Activated naive CD4-positive, alpha-beta T cell treated with anti-CD3 and anti-CD28 coated beads for 36 hours (primary cell): ENCODE measurements at regions of chr5 and their contacts with region 1.

Region 1: GRCh38 chr5:157219491-157220271 is 39.0 kb downstream of the ITK start:
- DNase-seq: peak; percentile 65
- H3K4me3 Mint-ChIP-seq: peak overlapping the region; percentile 45
- H3K27ac Mint-ChIP-seq: peak overlapping the region; percentile 97
- H3K4me1 Mint-ChIP-seq: peaks cover 81% of the 10 kb centered on the region
- H3K27me3 Mint-ChIP-seq: no peaks in the 10 kb centered on the region

Region 2: DNA sequence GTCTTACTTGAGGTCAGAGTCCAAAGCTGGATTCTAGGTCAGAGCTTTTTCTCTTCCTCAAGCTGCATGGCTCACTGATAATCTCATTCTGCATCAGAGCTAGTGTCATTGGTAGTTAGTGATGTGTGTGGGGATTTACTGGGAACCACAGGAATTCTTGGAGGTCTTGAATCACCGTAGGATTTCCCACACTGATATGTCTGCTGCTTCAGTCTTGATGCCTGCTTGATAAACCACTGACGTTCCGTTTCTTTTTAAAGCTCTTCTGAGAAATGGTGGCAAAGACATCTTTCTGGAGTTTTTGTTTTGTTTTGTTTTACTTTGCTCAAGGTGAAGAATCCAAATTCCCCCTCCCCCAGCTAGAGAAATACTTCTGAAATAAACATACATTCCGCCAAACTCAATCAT is 52.5 kb before region 1 on chr5:
- CTCF ChIA-PET with region 1: interaction called, 3 read pairs
- intact Hi-C with region 1: loop called (anchors 1 kb)
- DNase-seq: peak; percentile 61
- H3K4me3 Mint-ChIP-seq: peak overlapping the region; percentile 64
- H3K27ac Mint-ChIP-seq: peak overlapping the region; percentile 100
- H3K4me1 Mint-ChIP-seq: peaks cover 79% of the 10 kb centered on the region
- H3K27me3 Mint-ChIP-seq: no peaks in the 10 kb centered on the region

Region 3: DNA sequence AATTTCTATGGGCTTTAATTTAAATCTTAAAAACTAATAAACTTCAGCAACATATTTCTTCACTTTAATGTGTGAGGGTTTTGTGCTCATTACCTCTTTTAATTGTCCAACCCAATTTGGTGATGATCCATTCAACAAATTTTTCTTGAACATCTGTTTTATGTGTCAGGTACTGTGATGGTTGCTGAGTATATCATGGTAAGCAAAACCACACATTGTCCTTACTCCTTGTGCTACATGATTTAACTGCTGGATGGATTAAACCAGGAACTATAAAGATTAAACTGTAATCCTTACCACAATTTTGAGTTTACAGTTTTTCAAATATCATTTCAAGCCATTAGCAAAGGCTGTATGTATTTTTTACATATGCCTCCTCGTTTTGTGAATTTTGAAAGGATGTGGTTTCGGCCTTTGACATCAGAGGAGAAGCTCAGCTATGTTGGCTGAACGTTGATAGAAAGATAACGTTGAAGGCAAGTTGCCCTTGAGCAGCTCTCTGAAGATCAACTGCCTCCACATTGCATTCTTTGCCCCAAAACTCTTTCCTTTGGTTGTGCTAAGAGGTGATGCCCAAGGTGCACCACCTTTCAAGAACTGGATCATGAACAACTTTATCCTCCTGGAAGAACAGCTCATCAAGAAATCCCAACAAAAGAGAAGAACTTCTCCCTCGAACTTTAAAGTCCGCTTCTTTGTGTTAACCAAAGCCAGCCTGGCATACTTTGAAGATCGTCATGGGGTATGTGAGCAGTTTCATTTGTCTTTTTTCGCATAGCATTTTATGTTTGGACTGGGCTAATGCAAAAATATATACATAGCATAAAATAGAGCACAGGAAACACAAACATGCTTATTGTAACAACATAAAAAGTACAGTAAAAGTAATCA is 39.1 kb before region 1 on chr5 and contains the start of gene ITK:
- CTCF ChIA-PET with region 1: interaction called, 7 read pairs
- intact Hi-C with region 1: loop called (anchors 1 kb)
- DNase-seq: no peak
- H3K4me3 Mint-ChIP-seq: peak within 1 kb of the TSS; percentile 98
- H3K27ac Mint-ChIP-seq: peak within 1 kb of the TSS; percentile 100
- H3K4me1 Mint-ChIP-seq: peaks cover 50% of the 10 kb centered on the region
- H3K27me3 Mint-ChIP-seq: no peaks in the 10 kb centered on the region
- total RNA-seq, gene ITK: 340 TPM

Region 4: DNA sequence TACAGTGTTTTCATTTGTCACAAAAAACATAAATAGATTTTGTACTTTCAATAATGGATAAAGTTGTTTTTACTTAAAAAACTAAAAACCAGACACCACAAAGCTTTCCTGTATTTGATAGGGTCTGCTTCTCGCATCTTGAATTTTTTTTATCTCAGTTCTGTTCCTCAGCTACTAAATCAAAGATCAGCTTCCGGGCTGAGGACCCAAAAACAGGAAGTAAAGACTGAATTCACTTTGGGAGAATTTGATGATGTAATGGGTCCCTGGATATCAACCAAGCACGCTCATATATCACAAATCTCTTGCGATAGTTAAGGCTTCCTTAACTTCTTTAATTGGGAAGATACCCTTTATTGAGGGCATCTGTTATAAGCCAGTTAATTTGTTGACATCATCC is 14.9 kb before region 1 on chr5:
- CTCF ChIA-PET with region 1: interaction called, 10 read pairs
- intact Hi-C with region 1: loop called (anchors 1 kb)
- DNase-seq: no peak
- H3K4me3 Mint-ChIP-seq: peak overlapping the region; percentile 45
- H3K27ac Mint-ChIP-seq: peak overlapping the region; percentile 100
- H3K4me1 Mint-ChIP-seq: peaks cover 90% of the 10 kb centered on the region
- H3K27me3 Mint-ChIP-seq: no peaks in the 10 kb centered on the region

Region 5: DNA sequence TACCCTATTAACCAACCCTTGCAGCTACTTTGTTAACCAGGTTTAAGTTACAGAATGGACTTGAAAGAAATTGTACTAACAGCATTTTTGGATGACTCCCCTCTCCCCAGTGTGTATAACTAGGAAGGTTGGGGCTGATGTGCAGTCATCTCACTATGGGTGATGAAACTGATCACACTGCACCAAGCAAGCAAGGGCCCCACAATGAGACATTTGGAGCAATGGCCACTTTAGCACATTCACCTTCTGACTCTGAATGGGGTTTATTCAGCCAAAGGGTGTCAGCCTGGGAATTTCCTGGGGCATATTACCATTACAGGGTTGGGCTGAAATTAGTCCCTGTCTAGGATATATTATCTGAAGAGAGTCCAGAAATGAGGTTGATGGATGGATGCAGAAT is 27.6 kb after region 1 on chr5:
- CTCF ChIA-PET with region 1: interaction called, 4 read pairs
- intact Hi-C with region 1: loop called (anchors 1 kb)
- DNase-seq: peak; percentile 80
- H3K4me3 Mint-ChIP-seq: peak overlapping the region; percentile 24
- H3K27ac Mint-ChIP-seq: peak overlapping the region; percentile 96
- H3K4me1 Mint-ChIP-seq: peaks cover 94% of the 10 kb centered on the region
- H3K27me3 Mint-ChIP-seq: no peaks in the 10 kb centered on the region

Region 6: GRCh38 chr5:157259699-157260098 is 40.0 kb after region 1 on chr5:
- CTCF ChIA-PET with region 1: no interaction called
- intact Hi-C with region 1: no loop called
- DNase-seq: peak; percentile 4
- H3K4me3 Mint-ChIP-seq: no peak overlapping the region
- H3K27ac Mint-ChIP-seq: no peak overlapping the region
- H3K4me1 Mint-ChIP-seq: peaks cover 79% of the 10 kb centered on the region
- H3K27me3 Mint-ChIP-seq: no peaks in the 10 kb centered on the region

Region 7: DNA sequence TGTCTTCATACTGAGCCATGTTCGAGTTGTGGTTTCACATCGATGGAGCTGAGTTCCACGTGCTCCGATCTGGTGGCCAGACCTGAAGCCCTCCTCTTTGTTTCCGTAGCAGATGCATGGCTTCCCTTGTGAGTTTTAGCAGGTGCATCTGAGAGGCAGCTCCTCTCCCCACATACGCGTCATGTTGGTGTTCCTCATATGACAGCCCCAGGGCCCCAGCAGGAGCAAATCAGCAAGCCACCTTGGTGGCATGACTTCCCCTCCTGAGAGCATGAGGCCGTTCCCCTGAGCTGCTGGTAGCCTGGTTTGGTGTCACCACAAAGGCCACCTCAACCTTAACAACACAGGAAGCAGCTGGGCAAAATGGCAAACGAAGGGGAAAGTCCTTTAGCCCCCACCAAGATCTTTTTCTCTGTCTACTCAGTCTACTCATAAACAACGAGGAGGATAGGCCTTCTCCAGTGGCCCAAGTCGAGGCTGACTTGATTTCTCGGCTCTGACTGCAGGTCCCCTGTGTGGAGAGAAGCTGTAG is 52.1 kb after region 1 on chr5:
- CTCF ChIA-PET with region 1: interaction called, 4 read pairs
- intact Hi-C with region 1: loop called (anchors 1 kb)
- DNase-seq: peak; percentile 96
- H3K4me3 Mint-ChIP-seq: peak overlapping the region; percentile 74
- H3K27ac Mint-ChIP-seq: peak overlapping the region; percentile 99
- H3K4me1 Mint-ChIP-seq: peaks cover 79% of the 10 kb centered on the region
- H3K27me3 Mint-ChIP-seq: no peaks in the 10 kb centered on the region

Region 8: DNA sequence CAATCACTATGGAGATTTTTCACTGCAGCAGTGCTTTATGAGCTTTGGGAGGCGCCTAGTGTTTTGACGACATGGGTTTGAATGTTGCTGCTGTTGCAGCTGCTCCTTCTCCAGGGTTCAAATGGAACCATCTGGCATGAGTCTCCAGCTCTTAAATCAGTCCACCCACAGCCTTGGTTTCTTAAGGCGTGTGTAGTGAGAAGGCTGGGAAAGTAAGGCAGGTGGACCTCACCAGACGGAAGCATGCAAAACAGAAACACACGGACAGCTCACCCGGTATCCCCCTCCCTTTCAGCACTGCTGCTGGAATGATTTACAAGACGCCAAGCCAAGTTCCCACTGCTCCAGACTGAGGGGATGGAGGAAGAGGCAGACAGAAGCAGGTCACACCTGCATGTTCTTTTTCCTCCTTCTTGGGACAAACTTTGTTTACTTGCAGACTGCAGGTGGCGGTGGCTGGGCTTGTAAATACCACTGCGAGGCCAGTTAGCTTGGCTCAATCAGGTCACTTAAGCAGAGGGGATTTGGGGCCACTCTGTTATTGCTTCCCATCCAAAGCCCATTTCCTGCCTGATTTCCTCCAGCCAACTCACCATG is 308.5 kb after region 1 on chr5:
- CTCF ChIA-PET with region 1: no interaction called
- intact Hi-C with region 1: no loop called
- DNase-seq: no peak
- H3K4me3 Mint-ChIP-seq: no peak overlapping the region
- H3K27ac Mint-ChIP-seq: no peak overlapping the region
- H3K4me1 Mint-ChIP-seq: no peaks in the 10 kb centered on the region
- H3K27me3 Mint-ChIP-seq: no peaks in the 10 kb centered on the region